ENCODE measurements at regions of chr1 and their contacts with region 1.

Region 1: DNA sequence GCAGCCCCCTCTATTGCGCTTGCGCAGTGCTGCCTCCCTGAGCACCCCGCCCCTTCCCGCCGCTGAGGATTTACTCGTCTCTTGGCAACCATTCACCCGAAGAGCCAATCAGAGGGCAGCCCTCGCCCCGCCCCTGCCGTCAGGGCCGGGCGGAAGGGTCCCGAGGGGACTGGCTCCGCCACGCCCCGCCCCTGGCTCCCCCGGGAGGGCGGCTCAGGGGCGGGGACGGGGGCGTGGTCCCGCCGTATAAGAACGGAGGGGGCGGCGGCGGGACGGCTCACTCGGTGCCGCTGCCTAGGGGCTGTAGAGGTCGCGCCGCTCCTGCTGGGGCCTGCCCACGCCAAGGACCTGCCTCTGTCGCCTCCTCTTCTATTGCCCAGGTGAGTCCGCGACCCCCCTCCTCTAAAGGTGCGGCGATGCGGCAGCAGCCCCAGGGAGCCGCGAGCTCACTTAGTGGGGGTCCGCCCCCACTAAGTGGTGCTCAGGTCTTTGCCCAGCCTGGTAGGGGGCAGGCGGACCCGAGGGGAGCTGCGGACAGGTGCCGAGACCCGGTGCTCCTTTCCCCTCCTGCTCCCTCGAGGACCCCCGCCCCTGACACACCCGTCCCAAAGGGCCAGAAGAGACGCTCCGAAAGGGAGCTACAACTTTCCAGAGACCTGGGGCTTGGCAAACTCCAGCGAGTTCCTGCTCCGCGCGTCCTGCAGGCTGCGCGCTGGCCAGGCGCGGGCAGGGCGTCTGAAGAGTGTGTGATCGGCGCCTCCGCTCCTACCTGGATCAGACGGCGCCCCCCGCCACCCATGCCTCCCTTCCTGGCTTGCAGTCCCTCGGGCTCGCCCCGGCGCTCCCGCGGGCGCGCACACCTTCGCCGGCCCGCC is at the start of gene TENT5C:
- DNase-seq: peak; percentile 92 to 97
- H3K4me3 ChIP-seq: peak within 1 kb of the TSS; percentile 70 to 87 (median 77)
- H3K27ac ChIP-seq: no peak within 1 kb of the TSS
- H3K4me1 ChIP-seq: peaks cover 0 to 9% (median 5%) of the 10 kb centered on the region in 4 experiments; a peak in 4 of 7 replicates
- H3K27me3 ChIP-seq: peaks cover 0 to 25% (median 16%) of the 10 kb centered on the region in 4 experiments; a peak in 6 of 7 replicates
- CTCF ChIP-seq: 0 out of 4 replicates have a peak, but pooled peaks of 1 of the 3 experiments have one; percentile 6
- EP300 ChIP-seq: no peak
- POLR2A ChIP-seq: peak; percentile 79 to 92
- RAD21 ChIP-seq: no peak; a peak in 1 of 4 replicates
- total RNA-seq, gene TENT5C: 0.75 and 0.99 TPM in 2 replicates

Region 2: DNA sequence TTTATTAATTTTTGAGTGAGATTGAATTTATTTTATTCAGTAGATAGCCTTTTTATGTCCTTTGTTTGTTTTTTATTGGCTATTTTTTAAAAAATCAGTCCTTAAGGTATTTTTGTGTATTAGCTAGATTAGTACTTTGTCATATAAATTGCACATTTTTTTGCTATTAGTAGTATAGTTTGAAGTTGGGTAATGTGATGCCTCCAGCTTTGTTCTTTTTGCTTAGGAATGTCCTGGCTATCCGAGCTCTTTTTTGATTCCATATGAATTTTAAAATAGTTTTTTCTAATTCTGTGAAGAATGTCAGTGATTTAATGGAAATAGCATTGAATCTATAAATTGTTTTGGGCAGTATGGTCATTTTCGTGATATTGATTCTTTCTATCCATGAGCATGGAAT is 158.3 kb before region 1 on chr1:
- CTCF ChIA-PET with region 1: no interaction called
- POLR2A ChIA-PET with region 1: no interaction called
- DNase-seq: no peak
- H3K4me3 ChIP-seq: no peak overlapping the region
- H3K27ac ChIP-seq: no peak overlapping the region
- H3K4me1 ChIP-seq: no peaks in the 10 kb centered on the region
- H3K27me3 ChIP-seq: no peaks in the 10 kb centered on the region
- CTCF ChIP-seq: no peak
- EP300 ChIP-seq: no peak
- POLR2A ChIP-seq: no peak
- RAD21 ChIP-seq: no peak

Region 3: DNA sequence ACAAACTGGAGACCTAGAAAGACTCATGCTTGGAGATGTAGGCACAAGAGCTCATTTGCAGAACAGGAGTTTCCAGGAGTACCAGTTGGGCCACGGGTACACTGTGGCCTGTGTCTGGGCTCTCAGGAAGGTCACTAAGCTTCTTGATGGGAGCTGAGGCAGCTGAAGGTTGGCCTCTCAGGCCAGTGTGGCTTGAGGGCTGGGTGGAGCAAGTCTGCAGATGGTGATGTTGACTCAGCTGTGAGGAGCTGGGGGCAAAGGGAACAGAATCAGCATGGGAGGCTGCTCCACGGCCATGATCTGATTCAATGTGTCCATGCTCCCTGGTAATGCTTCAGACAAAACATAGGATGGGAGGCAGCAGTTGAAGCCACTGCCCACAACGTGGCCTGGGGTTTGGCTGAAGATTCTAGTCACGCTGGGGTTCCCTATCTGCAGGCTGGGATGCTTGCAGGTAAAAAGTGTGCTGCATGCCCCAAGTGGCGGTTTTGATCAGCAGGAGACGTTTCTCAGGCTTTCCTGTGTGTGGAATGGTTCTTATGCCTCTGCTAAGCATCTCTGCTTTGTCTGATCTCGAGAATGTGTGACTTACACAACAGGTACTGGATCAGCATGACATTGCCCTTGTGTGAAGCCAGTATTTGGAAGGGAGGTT is 15.6 kb before region 1 on chr1:
- CTCF ChIA-PET with region 1: interaction called, 5 read pairs
- POLR2A ChIA-PET with region 1: interaction called, 16 read pairs
- DNase-seq: no peak
- H3K4me3 ChIP-seq: no peak overlapping the region
- H3K27ac ChIP-seq: no peak overlapping the region
- H3K4me1 ChIP-seq: peaks cover 0 to 2% (median 0%) of the 10 kb centered on the region in 4 experiments; a peak in 1 of 7 replicates
- H3K27me3 ChIP-seq: no peaks in the 10 kb centered on the region
- CTCF ChIP-seq: peak; percentile 9 to 46 (median 21); a peak in 3 of 4 replicates
- EP300 ChIP-seq: no peak
- POLR2A ChIP-seq: no peak
- RAD21 ChIP-seq: peak in 1 of 2 experiments; percentile 18; a peak in 1 of 4 replicates

Region 4: DNA sequence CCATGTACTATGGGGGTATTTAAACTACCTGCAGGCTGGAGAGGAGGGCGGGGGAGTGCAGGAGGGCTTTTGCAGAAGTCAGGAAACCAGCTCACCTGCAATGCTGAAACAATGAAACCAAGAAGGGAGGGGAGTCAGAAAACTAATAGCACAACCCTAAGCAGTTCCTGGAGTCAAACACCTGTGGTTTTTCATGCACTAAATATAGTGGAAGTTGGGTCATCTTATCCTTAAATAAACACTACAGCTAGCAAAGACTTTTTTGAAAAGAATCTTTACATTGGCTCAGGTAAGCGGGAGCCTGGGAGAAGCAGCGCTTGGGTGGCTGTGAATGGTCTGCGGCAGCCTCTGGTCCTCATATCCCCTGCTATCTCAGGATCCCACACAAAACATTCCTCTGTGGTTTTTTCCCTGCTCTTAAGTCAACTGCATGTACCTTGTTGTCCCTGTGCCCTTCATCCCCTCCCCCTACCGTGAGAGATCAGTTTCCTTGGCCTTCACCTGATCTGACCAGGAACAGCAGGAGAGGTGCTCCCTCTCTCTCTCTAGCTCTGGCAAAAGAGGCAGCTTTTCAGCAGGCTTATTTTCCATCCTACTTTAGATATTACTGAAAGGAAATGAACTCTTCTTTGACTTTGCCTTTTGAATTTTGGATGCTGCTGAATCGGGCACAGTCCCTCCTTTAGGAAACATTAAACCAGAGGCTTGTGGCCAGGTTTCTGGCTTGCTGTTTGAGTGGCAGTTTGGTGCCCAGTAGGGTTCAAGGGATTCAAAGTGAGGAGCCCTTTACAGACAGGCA is 26.5 kb after region 1 on chr1:
- CTCF ChIA-PET with region 1: interaction called, 3 read pairs
- POLR2A ChIA-PET with region 1: interaction called, 12 read pairs
- DNase-seq: no peak
- H3K4me3 ChIP-seq: peak overlapping the region in 1 of 4 experiments; percentile 4; a peak in 1 of 8 replicates
- H3K27ac ChIP-seq: no peak overlapping the region
- H3K4me1 ChIP-seq: peaks cover 5 to 16% (median 8%) of the 10 kb centered on the region in 4 experiments; a peak in 6 of 7 replicates
- H3K27me3 ChIP-seq: 0 out of 7 replicates have a peak, but pooled peaks cover 0 to 2% (median 0%) of the 10 kb centered on the region in 4 experiments
- CTCF ChIP-seq: no peak
- EP300 ChIP-seq: no peak
- POLR2A ChIP-seq: no peak
- RAD21 ChIP-seq: no peak